ENCODE measurements at regions of chr4 and their contacts with region 1.

Region 1: DNA sequence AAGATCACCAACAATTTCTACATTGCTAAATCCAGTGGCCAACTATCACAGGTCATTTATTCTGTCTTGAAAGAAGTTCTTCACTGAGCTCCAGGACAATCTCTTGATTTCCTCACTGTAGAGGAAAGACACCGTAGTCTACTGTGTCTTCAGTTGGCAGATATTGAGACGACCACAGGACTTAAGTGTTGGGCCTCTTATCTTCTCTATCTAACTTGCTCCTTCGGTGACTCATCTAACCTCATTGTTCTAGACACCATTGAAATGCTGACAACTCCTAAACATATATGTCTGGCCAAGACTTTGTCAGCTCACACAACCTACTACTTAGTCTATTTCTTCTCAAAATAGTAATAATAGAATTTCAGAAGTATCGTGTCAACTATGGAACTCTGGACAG is 425.8 kb downstream of the ARAP2 start:
- DNase-seq: no peak
- H3K4me3 ChIP-seq: no peak overlapping the region
- H3K27ac ChIP-seq: no peak overlapping the region
- H3K4me1 ChIP-seq: no peaks in the 10 kb centered on the region
- H3K27me3 ChIP-seq: no peaks in the 10 kb centered on the region
- CTCF ChIP-seq: no peak
- POLR2A ChIP-seq: no peak

Region 2: DNA sequence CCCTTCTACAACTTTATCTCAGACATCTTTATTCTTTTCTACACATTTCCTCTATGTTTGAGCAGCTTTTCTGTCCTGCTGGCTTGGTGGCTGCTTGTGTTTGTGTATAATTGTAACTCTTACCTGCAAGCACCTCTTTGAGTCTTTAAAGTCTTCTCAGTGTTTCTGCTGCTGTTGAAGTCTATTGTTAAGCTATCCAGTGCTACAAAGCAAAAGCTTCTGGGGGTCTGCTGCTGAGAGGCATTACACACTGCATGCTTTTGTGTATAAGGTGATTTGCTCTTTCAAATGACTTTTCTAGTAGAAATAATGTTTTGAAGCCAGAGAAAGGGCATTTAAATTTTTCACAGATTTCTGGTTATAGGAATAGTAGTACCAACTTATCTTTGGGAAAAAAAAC is 704.7 kb after region 1 on chr4:
- intact Hi-C with region 1: no loop called
- DNase-seq: no peak
- H3K4me3 ChIP-seq: no peak overlapping the region
- H3K27ac ChIP-seq: no peak overlapping the region
- H3K4me1 ChIP-seq: no peaks in the 10 kb centered on the region
- H3K27me3 ChIP-seq: no peaks in the 10 kb centered on the region
- CTCF ChIP-seq: no peak
- POLR2A ChIP-seq: no peak

Region 3: GRCh38 chr4:36624030-36624429 is 805.5 kb after region 1 on chr4:
- intact Hi-C with region 1: loop called (anchors 5 kb)
- DNase-seq: no peak
- H3K4me3 ChIP-seq: no peak overlapping the region
- H3K27ac ChIP-seq: no peak overlapping the region
- H3K4me1 ChIP-seq: no peaks in the 10 kb centered on the region
- H3K27me3 ChIP-seq: no peaks in the 10 kb centered on the region
- CTCF ChIP-seq: no peak
- POLR2A ChIP-seq: no peak

Measured in breast epithelium (tissue), 4 donors.